Panc1 (cell line): ENCODE measurements at regions of chr3 and their contacts with region 1.

Region 1: DNA sequence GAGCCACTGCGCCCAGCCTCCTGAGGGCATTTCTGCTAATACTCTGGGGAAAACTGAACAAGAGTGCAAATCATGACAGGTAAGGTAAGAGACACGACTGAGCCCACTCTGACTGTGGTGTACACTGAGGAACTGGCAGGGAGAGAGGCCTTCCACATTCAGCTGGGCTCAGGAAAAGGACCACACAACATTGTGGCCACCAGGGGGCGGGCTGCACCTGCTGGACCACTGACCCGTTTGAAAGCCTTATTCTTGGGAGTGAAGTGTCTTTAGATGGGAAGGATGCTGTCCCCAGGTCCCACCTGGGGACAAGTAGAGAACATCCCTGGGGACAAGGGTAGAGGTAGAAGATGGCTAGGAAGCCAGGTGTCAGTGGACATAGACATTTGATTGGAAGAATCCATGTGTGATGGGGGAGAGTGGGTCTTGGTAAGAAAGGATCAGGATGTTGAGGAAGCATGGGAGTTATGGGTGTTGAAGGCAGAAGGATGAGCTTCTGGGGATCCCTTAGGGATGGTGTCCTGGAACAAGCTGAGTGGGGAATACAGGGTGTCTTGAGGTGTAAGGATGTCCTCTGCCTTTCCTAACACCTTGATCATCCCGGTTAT is 6.2 kb upstream of the CTDSPL start:
- DNase-seq: no peak
- ATAC-seq: peak; percentile 82
- H3K4me3 ChIP-seq: no peak overlapping the region
- H3K27ac ChIP-seq: no peak overlapping the region
- H3K4me1 ChIP-seq: no peaks in the 10 kb centered on the region
- H3K27me3 ChIP-seq: no peaks in the 10 kb centered on the region
- CTCF ChIP-seq: peak; percentile 90

Region 2: DNA sequence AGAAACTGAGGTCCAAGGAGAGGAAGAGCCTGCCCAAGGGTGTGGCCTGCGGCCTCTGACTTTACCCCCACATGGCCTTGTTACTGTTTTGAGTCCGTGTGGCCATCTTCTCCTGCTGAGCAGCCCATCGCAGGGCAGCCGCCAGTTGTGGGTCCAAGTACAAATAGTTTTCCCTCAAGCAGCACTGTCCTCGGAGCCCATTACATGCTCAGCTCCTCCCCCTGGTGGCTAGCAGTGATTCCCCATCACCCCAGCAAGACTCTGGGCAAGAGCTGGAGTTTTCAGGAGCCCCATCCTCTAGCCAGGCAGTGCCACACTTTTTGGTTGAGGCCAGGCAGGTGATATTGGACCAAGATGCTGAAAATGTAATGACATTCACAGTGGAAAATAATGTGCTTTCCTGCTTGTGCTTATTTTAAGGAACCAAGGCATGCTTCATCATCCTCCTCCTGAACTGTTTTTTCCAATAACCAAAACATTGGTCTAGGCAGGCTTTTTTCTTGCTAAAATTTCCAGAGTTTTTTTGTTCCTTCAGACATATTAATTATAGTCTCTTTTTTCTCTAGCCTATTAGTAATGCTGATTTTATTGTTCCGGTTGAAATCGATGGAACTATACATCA is 111.9 kb after region 1 on chr3:
- CTCF ChIA-PET with region 1: interaction called, 13 read pairs
- POLR2A ChIA-PET with region 1: no interaction called
- in situ Hi-C with region 1: no loop called
- intact Hi-C with region 1: loop called (anchors 1 kb)
- DNase-seq: peak; percentile 33
- ATAC-seq: peak; percentile 96
- H3K4me3 ChIP-seq: no peak overlapping the region
- H3K27ac ChIP-seq: no peak overlapping the region
- H3K4me1 ChIP-seq: no peaks in the 10 kb centered on the region
- H3K27me3 ChIP-seq: no peaks in the 10 kb centered on the region
- CTCF ChIP-seq: peak; percentile 80

Region 3: DNA sequence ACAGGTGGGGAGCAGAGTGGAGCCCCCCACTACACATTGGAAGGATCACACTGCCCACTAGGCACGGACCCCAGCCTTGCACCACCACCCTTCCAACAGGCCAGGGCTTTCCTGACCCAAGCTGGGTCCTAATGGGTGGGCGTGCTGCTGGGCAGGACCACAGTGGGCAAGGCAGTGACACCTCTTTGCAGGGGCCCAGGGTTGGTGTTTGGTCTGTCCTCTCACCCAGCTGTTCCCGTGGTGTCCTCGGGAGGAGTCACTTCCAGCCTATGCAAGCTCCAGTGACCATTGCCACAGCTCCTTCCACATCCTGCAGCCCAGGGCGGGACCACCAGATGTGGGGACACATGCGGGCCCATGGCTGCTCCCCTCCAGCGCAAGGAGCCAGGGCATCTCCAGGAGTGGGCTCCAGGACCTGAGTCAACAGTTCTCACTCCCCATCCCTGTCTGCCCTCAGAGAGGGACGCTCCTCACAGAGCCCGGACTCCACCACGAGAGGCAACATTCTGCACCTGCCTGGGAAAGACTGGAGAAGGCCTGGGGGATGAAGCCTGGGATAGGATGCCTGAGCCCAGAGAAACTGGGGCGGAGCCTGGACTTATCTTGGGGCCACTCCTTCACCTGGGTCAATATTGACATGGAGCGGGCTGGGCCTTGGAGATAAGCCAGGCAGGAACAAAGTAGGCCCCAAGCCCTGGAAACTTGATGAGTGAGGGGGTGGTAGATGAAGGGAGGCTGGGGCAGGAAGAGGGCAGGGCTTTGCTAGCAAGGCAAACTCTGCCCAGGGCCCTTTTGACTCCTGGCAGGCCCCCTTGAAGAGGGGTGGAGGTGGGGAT is 131.2 kb after region 1 on chr3:
- CTCF ChIA-PET with region 1: no interaction called
- POLR2A ChIA-PET with region 1: no interaction called
- in situ Hi-C with region 1: no loop called
- intact Hi-C with region 1: no loop called
- DNase-seq: no peak
- ATAC-seq: no peak
- H3K4me3 ChIP-seq: no peak overlapping the region
- H3K27ac ChIP-seq: no peak overlapping the region
- H3K4me1 ChIP-seq: no peaks in the 10 kb centered on the region
- H3K27me3 ChIP-seq: no peaks in the 10 kb centered on the region
- CTCF ChIP-seq: no peak